ENCODE measurements at regions of chr3 and their contacts with region 1.

Region 1: GRCh38 chr3:181176601-181177000 is 187.1 kb upstream of the DNAJC19 start:
- DNase-seq: peak; percentile 26
- ATAC-seq: peak; percentile 59; the same call in 1 of the 2 replicates
- H3K4me3 ChIP-seq: no peak overlapping the region
- H3K27ac ChIP-seq: no peak overlapping the region
- H3K4me1 ChIP-seq: no peaks in the 10 kb centered on the region
- H3K27me3 ChIP-seq: peaks cover 48% of the 10 kb centered on the region
- CTCF ChIP-seq: peak; percentile 46 to 66 (median 48); a peak in 4 of 6 replicates
- POLR2A ChIP-seq: no peak
- RAD21 ChIP-seq: peak; percentile 69

Region 2: GRCh38 chr3:180646187-180646790 is 530.3 kb before region 1 on chr3:
- CTCF ChIA-PET with region 1: no interaction called
- POLR2A ChIA-PET with region 1: no interaction called
- RAD21 ChIA-PET with region 1: no interaction called
- intact Hi-C with region 1: loop called (anchors 10 kb)
- DNase-seq: peak; percentile 2
- ATAC-seq: 0 out of 2 replicates have a peak, but pooled peaks have one; percentile 49
- H3K4me3 ChIP-seq: no peak overlapping the region
- H3K27ac ChIP-seq: no peak overlapping the region
- H3K4me1 ChIP-seq: no peaks in the 10 kb centered on the region
- H3K27me3 ChIP-seq: peaks cover 17% of the 10 kb centered on the region; the same call in 1 of the 2 replicates
- CTCF ChIP-seq: peak in 2 of 3 experiments; percentile 30 to 52; a peak in 3 of 6 replicates
- POLR2A ChIP-seq: no peak
- RAD21 ChIP-seq: peak; percentile 9; the same call in 1 of the 2 replicates

Region 3: GRCh38 chr3:180802837-180803236 is 373.8 kb before region 1 on chr3:
- CTCF ChIA-PET with region 1: interaction called, 3 read pairs
- POLR2A ChIA-PET with region 1: no interaction called
- RAD21 ChIA-PET with region 1: no interaction called
- intact Hi-C with region 1: loop called (anchors 2 kb)
- DNase-seq: peak; percentile 3
- ATAC-seq: peak; percentile 49; the same call in 1 of the 2 replicates
- H3K4me3 ChIP-seq: no peak overlapping the region
- H3K27ac ChIP-seq: no peak overlapping the region
- H3K4me1 ChIP-seq: no peaks in the 10 kb centered on the region
- H3K27me3 ChIP-seq: peaks cover 16% of the 10 kb centered on the region; the same call in 1 of the 2 replicates
- CTCF ChIP-seq: peak; percentile 39 to 51 (median 48); a peak in 5 of 6 replicates
- POLR2A ChIP-seq: no peak
- RAD21 ChIP-seq: peak; percentile 69

Region 4: GRCh38 chr3:181383760-181384159 is 207.2 kb after region 1 on chr3:
- CTCF ChIA-PET with region 1: no interaction called
- POLR2A ChIA-PET with region 1: no interaction called
- RAD21 ChIA-PET with region 1: no interaction called
- intact Hi-C with region 1: no loop called
- DNase-seq: no peak
- ATAC-seq: no peak
- H3K4me3 ChIP-seq: no peak overlapping the region
- H3K27ac ChIP-seq: no peak overlapping the region
- H3K4me1 ChIP-seq: no peaks in the 10 kb centered on the region
- H3K27me3 ChIP-seq: peaks cover 25% of the 10 kb centered on the region
- CTCF ChIP-seq: no peak
- POLR2A ChIP-seq: no peak
- RAD21 ChIP-seq: no peak

Measured in HCT116 (cell line).